ENCODE measurements at regions of chr10 and their contacts with region 1.

Region 1: DNA sequence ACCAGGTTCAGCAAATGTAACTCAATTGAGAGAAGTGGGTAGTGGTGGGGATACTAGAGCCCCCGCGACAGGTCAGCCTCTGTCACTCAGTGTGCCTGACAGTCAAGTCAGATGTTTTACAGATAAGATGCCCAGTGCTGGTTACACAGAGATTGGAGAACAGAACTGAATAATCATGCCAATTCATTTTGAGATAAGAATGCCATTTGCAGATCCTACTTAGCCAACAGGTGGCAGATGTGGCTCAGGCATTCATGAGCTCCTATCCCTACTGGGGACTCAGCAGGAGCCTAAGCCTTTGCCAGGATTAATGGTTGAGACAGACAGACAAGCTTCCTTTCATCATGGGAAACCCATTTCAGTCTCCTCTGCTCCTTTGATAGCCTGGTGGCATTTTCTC is 137.8 kb downstream of the MAPK8 start:
- DNase-seq: peak; percentile 72 to 81 (median 79)
- H3K4me3 ChIP-seq: no peak overlapping the region
- H3K27ac ChIP-seq: no peak overlapping the region
- H3K4me1 ChIP-seq: peaks cover 0 to 57% (median 31%) of the 10 kb centered on the region in 4 experiments
- H3K27me3 ChIP-seq: no peaks in the 10 kb centered on the region

Region 2: DNA sequence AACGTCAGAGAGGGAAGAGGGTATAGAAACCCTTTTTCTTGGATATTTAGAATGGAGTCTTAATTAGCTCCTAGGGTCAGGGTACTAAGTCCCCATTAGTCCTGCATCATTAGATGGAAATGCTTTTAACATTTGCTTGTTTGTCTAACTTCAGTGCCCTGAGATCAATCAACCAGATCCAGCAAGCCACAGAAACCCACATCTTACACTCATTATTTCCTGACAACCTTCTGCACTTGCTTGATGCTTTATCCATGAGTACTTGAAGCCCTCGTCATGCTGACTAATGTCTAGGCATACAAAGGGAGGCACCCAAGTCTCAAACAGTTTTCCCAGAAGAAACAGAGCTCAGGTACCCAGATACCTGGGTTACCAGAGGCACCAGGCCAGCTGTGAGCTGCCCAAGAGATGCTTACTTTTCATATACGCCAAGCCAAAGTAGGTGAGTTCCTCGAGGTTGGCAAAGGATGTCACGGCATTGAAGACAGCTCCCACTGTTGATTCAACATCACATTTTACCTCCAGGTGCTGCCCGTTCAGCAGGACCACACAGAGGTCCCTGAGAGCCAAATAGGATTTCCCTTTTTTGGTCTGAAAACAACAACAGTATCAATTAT is 212.5 kb before region 1 on chr10:
- CTCF ChIA-PET with region 1: no interaction called
- POLR2A ChIA-PET with region 1: no interaction called
- DNase-seq: peak in 2 of 3 donors; percentile 17 to 28
- H3K4me3 ChIP-seq: no peak overlapping the region
- H3K27ac ChIP-seq: no peak overlapping the region
- H3K4me1 ChIP-seq: no peaks in the 10 kb centered on the region
- H3K27me3 ChIP-seq: no peaks in the 10 kb centered on the region

Region 3: GRCh38 chr10:48456361-48456804 is 12.1 kb after region 1 on chr10:
- CTCF ChIA-PET with region 1: interaction called, 158 read pairs
- POLR2A ChIA-PET with region 1: interaction called, 6 read pairs
- DNase-seq: peak; percentile 70 to 91 (median 89)
- H3K4me3 ChIP-seq: peak overlapping the region in 4 of 7 experiments; percentile 23 to 49 (median 32)
- H3K27ac ChIP-seq: peak overlapping the region in 1 of 2 experiments; percentile 70
- H3K4me1 ChIP-seq: peaks cover 0 to 85% (median 63%) of the 10 kb centered on the region in 4 experiments
- H3K27me3 ChIP-seq: no peaks in the 10 kb centered on the region

Region 4: DNA sequence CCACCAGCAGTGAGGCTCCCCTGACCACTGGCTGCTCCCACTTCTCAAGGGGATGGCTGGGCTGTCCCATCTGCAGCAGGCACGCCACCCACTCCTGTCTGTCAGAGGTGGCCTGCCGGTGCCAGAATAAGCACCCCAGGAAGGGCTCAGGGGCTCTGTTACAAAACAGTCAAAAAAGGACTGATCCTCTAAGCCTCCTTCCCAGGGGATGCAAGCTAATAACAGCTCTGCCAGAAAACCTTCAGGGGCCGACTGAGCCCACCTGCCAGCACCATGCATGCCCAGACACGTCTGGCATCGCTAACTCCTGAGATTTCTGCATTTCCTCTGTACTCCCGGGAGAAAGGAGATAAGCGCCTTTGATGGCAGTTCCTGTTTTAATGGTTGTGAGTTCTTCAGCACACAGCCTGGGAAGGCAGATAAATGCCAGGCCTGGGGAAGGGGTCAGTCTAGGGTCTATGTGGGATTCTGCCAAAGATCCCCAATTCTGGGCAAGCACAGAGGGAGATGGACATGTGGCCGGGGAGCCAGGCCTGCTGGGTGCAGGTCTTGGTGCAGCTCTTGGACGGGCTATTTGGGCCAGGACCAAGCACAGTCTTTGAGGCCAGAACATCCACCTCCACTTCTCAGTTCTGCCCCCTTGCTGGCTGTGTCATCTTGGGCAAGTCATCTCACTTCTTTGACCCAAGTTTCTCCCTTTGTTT is 32.2 kb after region 1 on chr10:
- CTCF ChIA-PET with region 1: interaction called, 82 read pairs
- POLR2A ChIA-PET with region 1: no interaction called
- DNase-seq: peak in 2 of 3 donors; percentile 28 to 48
- H3K4me3 ChIP-seq: no peak overlapping the region
- H3K27ac ChIP-seq: peak overlapping the region in 1 of 2 experiments; percentile 54
- H3K4me1 ChIP-seq: peaks cover 12 to 87% (median 80%) of the 10 kb centered on the region in 4 experiments
- H3K27me3 ChIP-seq: no peaks in the 10 kb centered on the region

Region 5: DNA sequence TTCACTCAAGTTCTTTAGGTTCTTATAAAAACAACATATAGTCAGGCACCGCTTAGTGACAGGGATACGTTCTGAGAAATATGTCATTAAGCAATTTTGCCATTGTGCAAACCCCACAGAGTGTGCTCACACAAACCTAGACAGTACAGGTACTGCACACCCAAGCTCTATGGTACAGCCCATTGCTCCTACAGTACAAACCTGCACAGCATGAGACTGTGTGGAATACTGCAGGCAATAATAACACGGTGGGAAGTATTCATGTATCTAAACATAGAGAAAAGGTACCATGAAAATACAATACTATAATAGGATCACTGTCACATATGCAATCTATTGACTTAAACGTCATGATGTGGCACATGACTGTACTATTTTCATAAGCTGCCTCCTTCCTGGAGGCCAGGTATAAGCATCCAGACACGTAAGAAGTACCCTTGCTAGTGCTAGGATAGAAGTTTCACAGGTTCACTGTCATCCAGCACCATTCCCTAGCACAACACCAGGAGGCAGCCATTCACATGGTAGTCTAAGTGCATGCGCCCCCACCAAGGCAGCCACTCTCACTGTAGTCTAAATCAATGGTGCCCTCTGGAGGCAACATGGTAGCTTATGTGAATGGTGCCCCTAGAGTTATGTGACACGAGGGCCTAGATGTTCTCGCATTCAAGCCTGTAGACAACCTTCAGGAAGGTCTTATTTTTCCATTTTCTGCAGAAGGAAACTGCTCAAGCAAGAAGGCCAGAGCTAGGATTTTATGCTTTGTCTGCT is 62.1 kb after region 1 on chr10:
- CTCF ChIA-PET with region 1: interaction called, 220 read pairs
- POLR2A ChIA-PET with region 1: interaction called, 3 read pairs
- DNase-seq: peak; percentile 59 to 69 (median 60)
- H3K4me3 ChIP-seq: peak overlapping the region in 2 of 7 experiments; percentile 12 to 34
- H3K27ac ChIP-seq: peak overlapping the region in 1 of 2 experiments; percentile 83
- H3K4me1 ChIP-seq: peaks cover 0 to 98% (median 72%) of the 10 kb centered on the region in 4 experiments
- H3K27me3 ChIP-seq: no peaks in the 10 kb centered on the region